ENCODE measurements at regions of chr6 and their contacts with region 1.

Region 1: GRCh38 chr6:108835218-108835850 is 12.9 kb upstream of the ARMC2 start:
- DNase-seq: peak; percentile 92
- H3K4me3 Mint-ChIP-seq: no peak overlapping the region
- H3K27ac Mint-ChIP-seq: no peak overlapping the region
- H3K4me1 Mint-ChIP-seq: peaks cover 19% of the 10 kb centered on the region
- H3K27me3 Mint-ChIP-seq: peaks cover 3% of the 10 kb centered on the region

Region 2: GRCh38 chr6:107780226-107780625 is 1055.1 kb before region 1 on chr6:
- CTCF ChIA-PET with region 1: no interaction called
- intact Hi-C with region 1: no loop called
- DNase-seq: no peak
- H3K4me3 Mint-ChIP-seq: no peak overlapping the region
- H3K27ac Mint-ChIP-seq: no peak overlapping the region
- H3K4me1 Mint-ChIP-seq: peaks cover 57% of the 10 kb centered on the region
- H3K27me3 Mint-ChIP-seq: no peaks in the 10 kb centered on the region

Region 3: GRCh38 chr6:108541838-108542759 is 293.2 kb before region 1 on chr6:
- CTCF ChIA-PET with region 1: interaction called, 34 read pairs
- intact Hi-C with region 1: loop called (anchors 1 kb)
- DNase-seq: peak; percentile 83
- H3K4me3 Mint-ChIP-seq: peak overlapping the region; percentile 34
- H3K27ac Mint-ChIP-seq: no peak overlapping the region
- H3K4me1 Mint-ChIP-seq: peaks cover 7% of the 10 kb centered on the region
- H3K27me3 Mint-ChIP-seq: peaks cover 8% of the 10 kb centered on the region

Region 4: DNA sequence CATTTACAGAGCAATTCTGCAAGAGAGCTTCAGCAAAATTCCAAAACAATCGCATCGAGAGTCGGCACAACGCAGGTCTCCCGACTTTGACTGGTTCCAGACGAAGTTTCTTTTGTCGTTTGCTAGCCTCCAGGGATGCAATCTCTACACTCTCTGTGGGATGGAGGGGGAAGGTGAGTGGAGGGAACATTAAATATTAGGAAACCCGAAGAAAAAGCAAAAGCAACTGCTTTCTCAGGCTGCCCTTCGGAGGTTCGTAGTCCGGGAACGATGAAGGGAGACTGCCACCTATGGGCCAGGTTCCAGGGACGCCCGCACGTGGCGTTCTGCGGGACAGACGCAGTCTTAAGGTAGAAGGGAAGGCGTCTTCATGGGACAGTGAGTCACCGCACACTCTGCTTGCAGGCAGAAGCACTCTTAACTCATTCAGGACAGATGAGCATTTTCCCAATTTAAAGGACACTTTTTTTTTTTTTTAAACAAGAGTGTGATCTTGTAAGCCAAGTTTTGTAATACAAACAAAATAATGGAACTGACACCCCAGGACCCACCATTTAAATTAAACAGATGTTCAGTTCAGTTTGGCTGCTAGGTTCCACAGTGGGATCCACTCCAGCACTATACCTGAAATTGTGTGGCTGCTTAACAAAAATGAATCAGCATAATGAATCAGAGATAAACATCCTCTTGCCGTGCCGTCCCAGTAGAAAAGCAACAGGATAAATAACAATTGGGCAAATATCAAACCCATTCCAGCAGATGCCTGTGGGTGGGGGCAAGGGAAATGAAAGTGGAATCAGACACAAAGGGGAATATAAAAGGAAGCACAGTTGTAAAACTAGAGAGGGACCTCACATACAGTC is 52.9 kb before region 1 on chr6:
- CTCF ChIA-PET with region 1: interaction called, 7 read pairs
- intact Hi-C with region 1: loop called (anchors 2 kb)
- DNase-seq: peak; percentile 92
- H3K4me3 Mint-ChIP-seq: peak overlapping the region; percentile 68
- H3K27ac Mint-ChIP-seq: no peak overlapping the region
- H3K4me1 Mint-ChIP-seq: peaks cover 10% of the 10 kb centered on the region
- H3K27me3 Mint-ChIP-seq: peaks cover 3% of the 10 kb centered on the region

Region 5: GRCh38 chr6:108798670-108799353 is 36.5 kb before region 1 on chr6:
- CTCF ChIA-PET with region 1: interaction called, 7 read pairs
- intact Hi-C with region 1: loop called (anchors 5 kb)
- DNase-seq: peak; percentile 73
- H3K4me3 Mint-ChIP-seq: peak overlapping the region; percentile 43
- H3K27ac Mint-ChIP-seq: no peak overlapping the region
- H3K4me1 Mint-ChIP-seq: peaks cover 18% of the 10 kb centered on the region
- H3K27me3 Mint-ChIP-seq: no peaks in the 10 kb centered on the region

Region 6: DNA sequence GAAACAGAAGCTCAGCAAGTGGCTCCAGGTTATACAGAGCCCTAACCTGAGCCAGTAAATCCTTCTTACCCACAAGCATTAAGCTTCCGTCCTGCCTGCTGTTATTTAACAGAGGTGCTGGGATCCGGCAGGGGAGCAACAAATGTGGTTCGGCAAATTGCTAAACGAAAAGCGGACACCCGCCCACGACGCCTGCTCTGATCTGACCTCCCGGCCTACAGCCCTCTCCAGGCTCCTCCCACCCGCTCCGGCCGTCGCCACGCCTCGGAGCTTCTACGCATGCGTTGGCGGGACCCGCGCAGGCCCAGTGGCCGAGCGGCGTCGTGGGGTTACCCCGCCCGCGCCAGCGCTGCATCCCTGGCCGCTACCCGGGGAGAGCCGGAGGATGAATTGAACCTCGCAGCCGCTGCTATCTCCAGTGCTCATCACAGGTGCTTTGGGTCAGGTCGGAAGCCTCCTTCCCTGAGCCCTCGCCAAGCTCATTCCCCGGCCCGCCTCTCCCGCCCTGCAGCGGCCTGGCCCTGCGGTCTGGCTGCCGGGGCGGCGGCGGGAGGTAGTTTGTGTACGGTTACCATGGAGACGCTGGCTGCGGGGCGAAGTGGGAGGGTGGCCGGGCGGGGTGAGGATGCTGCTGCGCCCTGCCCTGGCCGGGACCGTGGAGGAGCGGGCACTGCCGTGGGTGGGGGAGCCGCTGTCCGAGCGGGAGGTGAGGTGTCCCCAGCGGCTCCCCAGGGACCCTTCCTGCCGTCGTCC is 13.0 kb after region 1 on chr6 and contains the start of gene ARMC2:
- CTCF ChIA-PET with region 1: interaction called, 12 read pairs
- intact Hi-C with region 1: no loop called
- DNase-seq: peak; percentile 87
- H3K4me3 Mint-ChIP-seq: peak within 1 kb of the TSS; percentile 82
- H3K27ac Mint-ChIP-seq: peak within 1 kb of the TSS; percentile 28
- H3K4me1 Mint-ChIP-seq: peaks cover 20% of the 10 kb centered on the region
- H3K27me3 Mint-ChIP-seq: no peaks in the 10 kb centered on the region
- total RNA-seq, gene ARMC2: 3.6 to 3.9 TPM

Region 7: GRCh38 chr6:108874470-108875160 is 39.3 kb after region 1 on chr6:
- CTCF ChIA-PET with region 1: interaction called, 6 read pairs
- intact Hi-C with region 1: loop called (anchors 1 kb)
- DNase-seq: peak; percentile 80
- H3K4me3 Mint-ChIP-seq: peak overlapping the region; percentile 20
- H3K27ac Mint-ChIP-seq: no peak overlapping the region
- H3K4me1 Mint-ChIP-seq: peaks cover 22% of the 10 kb centered on the region
- H3K27me3 Mint-ChIP-seq: peaks cover 2% of the 10 kb centered on the region

Region 8: GRCh38 chr6:108896111-108896661 is 60.9 kb after region 1 on chr6:
- CTCF ChIA-PET with region 1: interaction called, 5 read pairs
- intact Hi-C with region 1: loop called (anchors 1 kb)
- DNase-seq: no peak
- H3K4me3 Mint-ChIP-seq: no peak overlapping the region
- H3K27ac Mint-ChIP-seq: no peak overlapping the region
- H3K4me1 Mint-ChIP-seq: peaks cover 12% of the 10 kb centered on the region
- H3K27me3 Mint-ChIP-seq: no peaks in the 10 kb centered on the region

Measured in activated naive CD4-positive, alpha-beta T cell treated with anti-CD3 and anti-CD28 coated beads for 36 hours (primary cell).